BJ (cell line): ENCODE measurements at regions of chr16 and their contacts with region 1.

Region 1: GRCh38 chr16:53266156-53266555 is 168.1 kb upstream of the RBL2 start:
- DNase-seq: no peak
- H3K4me3 ChIP-seq: no peak overlapping the region
- H3K27me3 ChIP-seq: no peaks in the 10 kb centered on the region
- CTCF ChIP-seq: no peak

Region 2: DNA sequence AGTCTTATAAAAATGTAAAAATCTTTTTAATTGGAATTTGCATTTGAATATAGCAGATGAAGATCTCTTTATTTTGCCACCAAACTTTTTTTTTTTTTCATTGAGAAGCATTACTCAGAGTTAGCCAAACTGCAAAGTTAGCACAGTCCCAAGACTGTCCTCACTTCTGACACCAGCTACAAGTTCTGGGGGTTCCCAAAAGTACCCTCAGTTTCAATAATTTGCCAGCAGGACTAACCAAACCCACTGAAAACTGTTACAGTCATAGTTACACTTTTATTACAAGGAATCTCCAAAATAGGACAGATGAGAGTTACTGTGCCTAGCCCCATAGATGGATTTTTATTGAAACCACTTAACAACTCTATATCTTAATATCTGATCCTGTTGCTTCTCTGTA is 67.2 kb before region 1 on chr16:
- CTCF ChIA-PET with region 1: no interaction called
- POLR2A ChIA-PET with region 1: no interaction called
- DNase-seq: no peak
- H3K4me3 ChIP-seq: no peak overlapping the region
- H3K27me3 ChIP-seq: no peaks in the 10 kb centered on the region
- CTCF ChIP-seq: no peak

Region 3: GRCh38 chr16:53320992-53321391 is 54.8 kb after region 1 on chr16:
- CTCF ChIA-PET with region 1: no interaction called
- POLR2A ChIA-PET with region 1: interaction called, 12 read pairs
- DNase-seq: no peak
- H3K4me3 ChIP-seq: no peak overlapping the region
- H3K27me3 ChIP-seq: no peaks in the 10 kb centered on the region
- CTCF ChIP-seq: no peak

Region 4: DNA sequence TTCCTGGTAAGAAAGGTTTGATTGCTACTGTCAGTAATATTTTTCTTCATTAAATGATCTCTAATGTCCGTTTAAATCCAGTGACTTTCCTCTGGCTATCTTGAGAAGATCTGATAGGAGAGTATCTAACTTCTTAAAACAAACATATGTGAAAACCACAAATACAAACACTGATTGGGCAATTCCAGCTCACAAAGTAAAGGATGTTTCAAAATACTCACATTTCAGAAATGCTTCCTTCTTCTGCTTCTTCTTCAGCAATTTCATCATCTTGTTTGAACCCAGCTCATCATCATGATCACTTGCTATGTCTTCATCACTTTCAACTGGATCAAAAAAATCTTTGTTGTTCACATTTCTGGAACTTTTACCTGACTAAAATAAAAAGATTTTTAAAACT is 103.8 kb after region 1 on chr16:
- CTCF ChIA-PET with region 1: no interaction called
- POLR2A ChIA-PET with region 1: no interaction called
- DNase-seq: peak; percentile 9
- H3K4me3 ChIP-seq: no peak overlapping the region
- H3K27me3 ChIP-seq: peaks cover 18% of the 10 kb centered on the region
- CTCF ChIP-seq: no peak